Psoas muscle (tissue), 8 donors: ENCODE measurements at regions of chr3 and their contacts with region 1.

Region 1: DNA sequence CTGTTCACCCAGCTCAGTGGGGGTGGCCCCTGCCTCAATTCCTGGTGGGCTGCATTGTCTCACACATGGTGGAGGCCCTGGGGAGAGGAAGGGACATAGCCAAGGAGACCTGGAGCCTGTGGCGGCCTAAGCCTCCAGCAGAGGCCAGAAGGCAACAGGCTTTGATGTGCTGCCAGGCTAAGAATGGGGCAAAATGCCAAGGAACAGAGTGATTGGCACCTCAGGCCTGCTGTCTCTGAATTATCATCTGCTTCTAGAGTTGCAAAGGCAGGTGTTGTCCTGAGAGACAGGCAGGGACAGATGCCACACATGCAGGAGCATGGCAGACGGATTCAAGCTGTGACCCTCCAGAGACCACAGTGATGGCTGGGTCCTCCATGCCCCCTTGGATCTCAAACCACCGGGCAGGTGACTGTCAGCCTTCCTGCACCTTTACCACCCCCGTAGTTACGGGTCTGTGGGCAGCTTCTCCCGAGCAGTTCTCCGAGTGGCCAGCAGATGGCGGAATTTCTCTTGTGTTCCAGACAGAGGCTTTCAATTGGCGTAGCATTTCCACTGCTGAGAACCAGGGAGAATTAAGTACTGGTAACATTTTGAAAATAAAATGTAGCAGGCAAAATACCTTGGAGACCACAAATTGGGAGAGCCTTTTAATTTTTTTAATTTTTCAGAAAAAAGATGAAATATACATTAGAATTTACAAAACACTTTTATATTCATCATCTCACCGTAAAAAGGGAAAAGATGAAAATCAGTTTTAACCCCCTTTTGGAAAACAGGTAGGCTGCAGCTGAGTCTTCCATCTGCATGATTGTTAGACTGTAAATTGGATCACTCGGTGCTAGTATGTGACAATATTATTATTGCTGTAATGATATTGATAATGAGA is 525.5 kb upstream of the CFAP20DC start:
- DNase-seq: peak; percentile 77 to 87
- ATAC-seq: peak; percentile 74 to 88 (median 80)
- H3K4me3 ChIP-seq: no peak overlapping the region
- H3K27ac ChIP-seq: no peak overlapping the region
- H3K4me1 ChIP-seq: no peaks in the 10 kb centered on the region
- H3K27me3 ChIP-seq: no peaks in the 10 kb centered on the region
- CTCF ChIP-seq: peak; percentile 95

Region 2: DNA sequence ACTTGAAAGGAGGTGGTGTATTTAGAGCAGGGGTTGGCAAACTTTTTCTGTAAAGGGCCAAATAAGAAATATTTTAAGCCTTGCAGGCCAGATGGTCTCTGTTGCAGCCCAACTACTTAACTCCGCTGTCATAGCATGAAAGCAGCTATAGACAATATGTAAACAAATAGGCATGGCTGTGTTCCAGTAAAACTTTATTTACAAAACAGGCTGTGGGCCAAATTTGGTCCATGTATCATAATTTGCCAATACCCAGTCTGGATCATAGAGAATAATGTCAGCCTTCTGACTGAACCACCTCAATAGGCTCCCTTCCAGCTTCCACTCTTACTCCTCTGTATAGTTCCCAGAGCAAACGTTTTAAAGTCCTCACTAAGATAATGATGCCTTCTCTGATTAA is 113.3 kb after region 1 on chr3:
- intact Hi-C with region 1: no loop called
- DNase-seq: no peak
- ATAC-seq: no peak
- H3K4me3 ChIP-seq: no peak overlapping the region
- H3K27ac ChIP-seq: no peak overlapping the region
- H3K4me1 ChIP-seq: no peaks in the 10 kb centered on the region
- H3K27me3 ChIP-seq: no peaks in the 10 kb centered on the region
- CTCF ChIP-seq: no peak

Region 3: GRCh38 chr3:59857589-59858346 is 282.4 kb after region 1 on chr3:
- intact Hi-C with region 1: loop called (anchors 2 to 5 kb)
- DNase-seq: peak; percentile 77 to 79
- ATAC-seq: peak; percentile 74 to 91 (median 82)
- H3K4me3 ChIP-seq: no peak overlapping the region
- H3K27ac ChIP-seq: no peak overlapping the region
- H3K4me1 ChIP-seq: no peaks in the 10 kb centered on the region
- H3K27me3 ChIP-seq: no peaks in the 10 kb centered on the region
- CTCF ChIP-seq: peak; percentile 88